ENCODE measurements at regions of chr19 and their contacts with region 1.

Region 1: GRCh38 chr19:53519451-53519850 is 18.5 kb upstream of the ZNF331 start:
- DNase-seq: peak; percentile 78
- H3K4me3 ChIP-seq: no peak overlapping the region
- H3K27ac ChIP-seq: peak overlapping the region; percentile 79 to 81
- H3K4me1 ChIP-seq: peaks cover 7% of the 10 kb centered on the region
- H3K27me3 ChIP-seq: no peaks in the 10 kb centered on the region
- CTCF ChIP-seq: no peak
- POLR2A ChIP-seq: no peak

Region 2: DNA sequence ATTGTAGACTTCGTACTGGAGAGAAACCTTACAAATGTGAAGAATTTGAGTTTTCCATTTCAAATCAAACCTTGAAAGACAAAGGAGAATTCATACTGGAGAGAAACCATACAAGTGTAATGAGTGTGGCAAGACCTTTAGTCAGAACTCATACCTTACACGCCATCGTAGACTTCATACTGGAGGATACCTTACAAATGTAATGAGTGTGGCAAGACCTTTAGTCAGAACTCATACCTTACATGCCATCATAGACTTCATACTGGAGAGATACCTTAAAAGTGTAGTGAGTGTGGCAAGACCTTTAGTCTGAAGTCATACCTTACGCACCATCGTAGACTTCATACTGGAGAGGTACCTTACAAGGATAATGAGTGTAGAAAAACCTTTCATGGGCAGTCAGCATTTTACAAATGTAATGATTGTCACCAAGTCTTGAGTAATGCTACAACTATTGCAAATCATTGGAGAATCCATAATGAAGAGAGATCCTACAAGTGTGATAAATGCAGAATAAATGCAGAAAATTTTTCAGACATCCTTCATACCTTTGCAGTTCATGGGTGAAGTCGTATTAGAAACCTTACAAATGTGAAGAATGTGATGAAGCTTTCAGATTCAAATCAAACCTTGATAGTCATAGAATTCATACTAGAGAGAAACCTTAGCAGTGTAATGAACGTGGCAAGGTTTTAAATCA is 109.8 kb before region 1 on chr19:
- intact Hi-C with region 1: no loop called
- DNase-seq: no peak
- H3K4me3 ChIP-seq: no peak overlapping the region
- H3K27ac ChIP-seq: no peak overlapping the region
- H3K4me1 ChIP-seq: no peaks in the 10 kb centered on the region
- H3K27me3 ChIP-seq: no peaks in the 10 kb centered on the region
- CTCF ChIP-seq: no peak
- POLR2A ChIP-seq: no peak

Region 3: DNA sequence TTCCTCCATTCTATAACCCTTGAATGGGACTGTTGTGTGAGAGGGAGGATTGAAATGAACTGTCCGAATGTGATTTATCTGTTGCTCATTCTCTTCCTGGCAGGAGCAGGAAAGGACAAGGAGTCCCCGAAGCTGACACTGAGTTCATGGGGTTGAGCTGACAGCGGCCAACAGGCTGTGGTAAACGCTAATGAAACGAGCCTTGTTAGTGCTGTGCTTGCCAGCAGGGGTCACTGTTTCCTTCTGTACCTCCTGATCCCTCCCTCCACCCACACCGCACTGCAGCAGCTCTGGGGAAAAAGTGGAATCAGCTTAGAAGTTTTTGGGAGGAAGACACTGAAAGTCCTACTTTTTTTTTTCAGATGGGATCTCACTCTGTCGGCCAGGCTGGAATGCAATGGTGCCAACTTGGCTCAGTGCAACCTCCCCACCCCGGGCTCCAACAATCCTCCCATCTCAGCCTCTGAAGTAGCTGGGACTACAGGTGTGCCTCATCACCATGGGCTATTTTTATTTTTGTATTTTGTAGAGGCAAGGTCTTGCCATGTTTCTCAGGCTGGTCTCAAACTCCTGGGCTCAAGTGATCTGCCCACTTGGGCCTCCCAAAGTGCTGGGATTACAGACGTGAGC is 94.4 kb before region 1 on chr19:
- intact Hi-C with region 1: loop called (anchors 5 kb)
- DNase-seq: peak; percentile 81
- H3K4me3 ChIP-seq: no peak overlapping the region
- H3K27ac ChIP-seq: peak overlapping the region; percentile 47 to 64
- H3K4me1 ChIP-seq: peaks cover 3% of the 10 kb centered on the region
- H3K27me3 ChIP-seq: no peaks in the 10 kb centered on the region
- CTCF ChIP-seq: peak; percentile 65 to 87 (median 82)
- POLR2A ChIP-seq: no peak